ENCODE measurements at regions of chr10 and their contacts with region 1.

Region 1: GRCh38 chr10:47311932-47312662 is 10.2 kb upstream of the GDF2 start:
- DNase-seq: peak; percentile 74
- ATAC-seq: peak; percentile 97
- H3K4me3 ChIP-seq: no peak overlapping the region
- H3K27ac ChIP-seq: no peak overlapping the region
- H3K4me1 ChIP-seq: peaks cover 10% of the 10 kb centered on the region
- H3K27me3 ChIP-seq: no peaks in the 10 kb centered on the region
- CTCF ChIP-seq: peak; percentile 82

Region 2: GRCh38 chr10:46293832-46294640 is 1018.1 kb before region 1 on chr10:
- CTCF ChIA-PET with region 1: no interaction called
- POLR2A ChIA-PET with region 1: no interaction called
- intact Hi-C with region 1: no loop called
- DNase-seq: peak; percentile 22
- ATAC-seq: peak; percentile 11; the same call in 1 of the 2 replicates
- H3K4me3 ChIP-seq: no peak overlapping the region
- H3K27ac ChIP-seq: no peak overlapping the region
- H3K4me1 ChIP-seq: no peaks in the 10 kb centered on the region
- H3K27me3 ChIP-seq: no peaks in the 10 kb centered on the region
- CTCF ChIP-seq: peak; percentile 36; the same call in 1 of the 2 replicates

Region 3: DNA sequence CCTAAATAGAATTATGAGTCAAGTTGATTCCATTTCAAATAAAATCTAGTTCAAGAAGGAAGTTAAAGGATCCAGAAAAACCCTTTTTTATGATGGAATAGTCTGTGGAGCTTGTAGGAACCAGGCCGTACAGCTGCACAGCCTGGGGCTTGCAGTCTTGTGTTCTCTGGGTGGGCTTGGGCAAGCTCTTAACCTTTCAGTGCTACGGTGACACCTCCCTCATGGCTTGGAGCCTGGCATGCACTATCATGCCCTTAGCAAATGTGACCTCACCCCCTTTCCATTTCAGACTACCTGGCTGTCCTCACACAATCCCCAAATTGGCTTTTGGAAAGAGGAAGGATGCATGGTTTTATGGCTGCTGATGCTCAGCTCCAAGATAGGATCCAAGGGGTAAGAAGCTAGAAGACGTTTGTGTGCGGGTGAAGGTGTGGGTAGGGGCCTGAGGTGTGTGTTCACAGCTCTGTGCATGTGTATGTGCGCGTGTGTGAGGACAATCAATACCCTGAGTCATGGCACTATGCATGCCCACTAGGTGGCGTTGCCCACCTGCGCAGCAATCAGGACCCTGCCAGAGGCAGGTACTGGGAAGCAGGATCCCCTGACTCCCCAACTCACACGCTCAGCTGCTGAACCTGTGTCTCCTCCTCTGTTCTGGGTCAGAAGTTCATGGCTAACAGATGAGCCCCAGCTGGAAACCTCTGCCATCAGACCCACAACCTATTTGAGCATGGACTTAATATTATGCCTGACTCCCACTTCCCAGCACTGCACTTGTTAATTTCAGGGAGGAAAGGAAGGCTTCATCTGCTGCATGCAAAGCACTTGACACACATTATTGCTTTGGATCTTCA is 287.5 kb before region 1 on chr10:
- CTCF ChIA-PET with region 1: interaction called, 5 read pairs
- POLR2A ChIA-PET with region 1: no interaction called
- intact Hi-C with region 1: loop called (anchors 1 kb)
- DNase-seq: peak; percentile 70
- ATAC-seq: peak; percentile 93
- H3K4me3 ChIP-seq: no peak overlapping the region
- H3K27ac ChIP-seq: no peak overlapping the region
- H3K4me1 ChIP-seq: no peaks in the 10 kb centered on the region
- H3K27me3 ChIP-seq: no peaks in the 10 kb centered on the region
- CTCF ChIP-seq: peak; percentile 83

Region 4: GRCh38 chr10:47047671-47048525 is 264.2 kb before region 1 on chr10:
- CTCF ChIA-PET with region 1: interaction called, 11 read pairs
- POLR2A ChIA-PET with region 1: no interaction called
- intact Hi-C with region 1: loop called (anchors 1 kb)
- DNase-seq: peak; percentile 74
- ATAC-seq: peak; percentile 79
- H3K4me3 ChIP-seq: no peak overlapping the region
- H3K27ac ChIP-seq: no peak overlapping the region
- H3K4me1 ChIP-seq: no peaks in the 10 kb centered on the region
- H3K27me3 ChIP-seq: no peaks in the 10 kb centered on the region
- CTCF ChIP-seq: peak; percentile 75

Region 5: GRCh38 chr10:47214520-47214919 is 97.6 kb before region 1 on chr10:
- CTCF ChIA-PET with region 1: no interaction called
- POLR2A ChIA-PET with region 1: no interaction called
- intact Hi-C with region 1: no loop called
- DNase-seq: no peak
- ATAC-seq: no peak
- H3K4me3 ChIP-seq: no peak overlapping the region
- H3K27ac ChIP-seq: no peak overlapping the region
- H3K4me1 ChIP-seq: no peaks in the 10 kb centered on the region
- H3K27me3 ChIP-seq: peaks cover 9% of the 10 kb centered on the region; the same call in 1 of the 2 replicates
- CTCF ChIP-seq: no peak

Region 6: DNA sequence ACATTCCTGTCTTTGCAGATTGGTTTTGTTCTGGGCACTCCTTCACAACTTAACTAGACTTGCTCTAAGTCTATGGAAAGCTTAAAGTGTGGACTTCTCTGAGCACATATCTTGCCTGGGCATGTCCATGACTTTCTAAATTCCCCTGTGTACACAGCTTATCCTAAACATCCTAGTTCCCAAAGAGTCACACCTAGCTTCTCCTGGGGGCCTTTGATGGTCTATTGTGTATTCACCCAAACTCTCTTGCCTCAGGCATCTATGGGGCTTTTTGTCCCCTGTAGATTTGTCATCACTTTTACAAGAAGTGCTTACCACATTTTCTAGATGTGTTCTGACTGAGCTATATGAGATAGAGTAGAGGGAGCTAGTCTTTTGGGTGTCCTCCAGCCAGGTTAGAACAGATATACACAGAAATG is 84.2 kb after region 1 on chr10:
- CTCF ChIA-PET with region 1: no interaction called
- POLR2A ChIA-PET with region 1: no interaction called
- intact Hi-C with region 1: no loop called
- DNase-seq: peak; percentile 72
- ATAC-seq: peak; percentile 74
- H3K4me3 ChIP-seq: no peak overlapping the region
- H3K27ac ChIP-seq: peak overlapping the region; percentile 59
- H3K4me1 ChIP-seq: peaks cover 12% of the 10 kb centered on the region
- H3K27me3 ChIP-seq: no peaks in the 10 kb centered on the region
- CTCF ChIP-seq: no peak

Region 7: DNA sequence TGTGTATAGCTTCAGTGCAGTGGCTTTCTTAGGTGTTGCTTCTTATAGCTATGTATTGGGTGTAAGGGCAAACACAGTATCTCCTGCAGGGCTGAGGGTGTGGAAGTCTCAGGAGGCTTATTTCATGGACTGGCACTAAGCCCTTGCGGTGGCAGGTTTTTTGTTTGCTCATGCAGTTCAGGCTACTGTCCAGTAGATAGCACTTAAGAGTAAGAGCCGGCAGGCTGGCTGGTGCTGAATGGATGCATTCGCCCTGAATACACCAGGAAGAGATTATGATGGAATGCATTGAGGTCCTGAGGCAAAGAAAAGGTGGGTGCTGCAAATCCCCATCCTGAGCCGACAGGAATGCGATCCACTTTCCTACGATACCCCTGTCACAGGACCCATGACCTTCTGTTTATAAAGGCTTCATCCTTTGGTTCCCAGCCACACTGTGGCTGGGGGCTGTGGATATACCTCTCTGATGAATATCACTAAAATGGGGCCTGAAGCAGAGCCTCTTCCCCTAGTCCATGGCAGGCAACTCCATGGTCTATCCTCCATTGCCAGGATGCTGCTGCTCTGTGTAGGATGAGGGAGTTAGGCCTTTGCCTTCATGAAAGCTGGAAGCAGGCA is 126.9 kb after region 1 on chr10:
- CTCF ChIA-PET with region 1: no interaction called
- POLR2A ChIA-PET with region 1: no interaction called
- intact Hi-C with region 1: no loop called
- DNase-seq: peak; percentile 79
- ATAC-seq: peak; percentile 92
- H3K4me3 ChIP-seq: no peak overlapping the region
- H3K27ac ChIP-seq: no peak overlapping the region
- H3K4me1 ChIP-seq: peaks cover 4% of the 10 kb centered on the region; the same call in 1 of the 2 replicates
- H3K27me3 ChIP-seq: no peaks in the 10 kb centered on the region
- CTCF ChIP-seq: peak; percentile 68

Measured in PC-3 (cell line).